Sigmoid colon (tissue), 7 donors: ENCODE measurements at regions of chr1 and their contacts with region 1.

Region 1: DNA sequence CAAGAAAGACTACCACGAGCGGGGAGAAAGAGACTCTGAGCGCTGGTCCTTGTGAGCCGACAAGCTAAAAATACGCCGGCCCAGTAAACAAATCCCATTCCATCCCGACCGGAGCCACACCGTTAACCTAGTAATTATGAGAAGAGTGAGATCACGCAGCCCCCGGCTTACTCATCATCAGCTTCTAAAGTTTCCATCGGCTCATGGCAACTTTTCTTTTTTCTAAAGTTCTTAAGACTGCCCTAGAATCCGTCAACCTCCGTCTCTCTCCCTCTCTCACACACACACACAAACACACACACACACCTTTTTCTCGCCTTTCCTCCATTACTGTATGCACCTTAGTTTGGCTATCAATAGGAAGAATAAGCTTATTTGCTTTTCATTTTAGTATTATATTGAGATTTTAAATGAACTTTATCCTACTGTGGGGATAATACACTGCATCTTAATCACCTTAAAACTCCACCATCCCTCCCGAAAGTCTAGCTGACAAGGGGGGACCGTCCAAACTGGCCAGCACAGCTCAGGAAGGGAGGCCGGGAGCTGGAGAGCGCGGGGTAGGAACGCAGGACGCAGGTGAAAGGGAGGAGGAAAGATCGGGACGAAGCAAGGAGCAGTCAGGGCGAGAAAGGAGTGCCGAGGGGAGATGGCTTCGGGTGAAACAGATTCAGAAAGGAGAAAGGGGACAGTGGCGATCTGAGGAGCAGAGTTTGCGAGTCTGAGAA is 697 bp downstream of the OTUD7B start:
- DNase-seq: peak; percentile 85
- H3K4me3 ChIP-seq: peak overlapping the region; percentile 89 to 92 (median 90)
- H3K27ac ChIP-seq: peak overlapping the region; percentile 96 to 99 (median 98)
- H3K4me1 ChIP-seq: peaks cover 0 to 52% (median 39%) of the 10 kb centered on the region in 4 donors
- H3K27me3 ChIP-seq: no peaks in the 10 kb centered on the region
- CTCF ChIP-seq: no peak
- EP300 ChIP-seq: no peak
- POLR2A ChIP-seq: no peak

Region 2: DNA sequence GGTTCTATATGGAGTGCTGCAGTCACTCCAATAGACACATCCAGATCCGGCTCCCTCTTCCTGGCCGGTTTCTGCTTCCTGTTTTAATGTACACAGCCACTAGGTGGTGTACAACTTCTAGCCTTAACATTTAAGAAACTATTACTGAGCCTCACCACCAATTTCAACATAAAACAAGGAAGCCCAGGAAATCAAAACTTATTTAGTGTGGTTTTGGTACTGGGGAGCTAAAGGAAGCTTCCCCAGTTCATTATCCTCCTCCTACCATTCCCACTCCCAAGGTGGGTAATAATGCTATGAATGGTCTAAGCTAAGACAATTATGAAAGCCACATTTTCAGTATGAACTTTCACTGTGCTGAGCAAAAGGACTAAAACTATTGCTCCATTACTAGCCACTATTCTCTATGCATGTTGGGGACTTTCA is 47.7 kb before region 1 on chr1:
- intact Hi-C with region 1: no loop called
- DNase-seq: no peak
- H3K4me3 ChIP-seq: no peak overlapping the region
- H3K27ac ChIP-seq: peak overlapping the region; percentile 40 to 58 (median 50)
- H3K4me1 ChIP-seq: peaks cover 0 to 7% (median 3%) of the 10 kb centered on the region in 4 donors
- H3K27me3 ChIP-seq: no peaks in the 10 kb centered on the region
- CTCF ChIP-seq: peak; percentile 68 to 79 (median 74)
- EP300 ChIP-seq: no peak
- POLR2A ChIP-seq: no peak

Region 3: GRCh38 chr1:149972547-149972946 is 37.3 kb before region 1 on chr1:
- intact Hi-C with region 1: loop called (anchors 5 kb)
- DNase-seq: no peak
- H3K4me3 ChIP-seq: no peak overlapping the region
- H3K27ac ChIP-seq: no peak overlapping the region
- H3K4me1 ChIP-seq: no peaks in the 10 kb centered on the region
- H3K27me3 ChIP-seq: no peaks in the 10 kb centered on the region
- CTCF ChIP-seq: no peak
- EP300 ChIP-seq: no peak
- POLR2A ChIP-seq: no peak

Region 4: DNA sequence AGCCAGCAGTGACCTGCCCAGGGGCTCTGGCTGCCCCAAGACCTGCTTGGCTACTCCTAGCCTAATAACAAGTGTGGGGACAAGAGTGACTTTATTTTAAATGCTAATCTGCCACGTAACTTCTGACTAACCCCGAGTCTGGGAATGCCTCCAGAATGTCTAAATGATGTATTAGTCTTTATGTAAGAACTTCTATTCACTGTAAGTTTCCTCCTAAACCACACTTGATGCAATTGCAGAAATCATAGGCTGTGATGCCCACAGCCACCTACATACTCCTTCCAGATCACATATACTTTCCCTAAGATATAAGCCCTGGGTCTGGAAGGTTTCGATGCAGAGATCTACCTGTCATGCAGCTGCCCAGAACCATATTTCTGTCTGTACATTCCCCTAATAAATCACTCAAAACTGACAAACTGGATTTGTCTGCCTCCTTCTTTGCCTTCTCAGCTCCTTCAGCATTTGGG is 51.8 kb after region 1 on chr1:
- intact Hi-C with region 1: loop called (anchors 2 kb)
- DNase-seq: peak; percentile 68
- H3K4me3 ChIP-seq: no peak overlapping the region
- H3K27ac ChIP-seq: peak overlapping the region; percentile 72 to 79 (median 76)
- H3K4me1 ChIP-seq: peaks cover 0 to 35% (median 25%) of the 10 kb centered on the region in 4 donors
- H3K27me3 ChIP-seq: no peaks in the 10 kb centered on the region
- CTCF ChIP-seq: no peak
- EP300 ChIP-seq: peak in 2 of 4 donors; percentile 4 to 30
- POLR2A ChIP-seq: no peak